ENCODE measurements at regions of chr4 and their contacts with region 1.

Region 1: DNA sequence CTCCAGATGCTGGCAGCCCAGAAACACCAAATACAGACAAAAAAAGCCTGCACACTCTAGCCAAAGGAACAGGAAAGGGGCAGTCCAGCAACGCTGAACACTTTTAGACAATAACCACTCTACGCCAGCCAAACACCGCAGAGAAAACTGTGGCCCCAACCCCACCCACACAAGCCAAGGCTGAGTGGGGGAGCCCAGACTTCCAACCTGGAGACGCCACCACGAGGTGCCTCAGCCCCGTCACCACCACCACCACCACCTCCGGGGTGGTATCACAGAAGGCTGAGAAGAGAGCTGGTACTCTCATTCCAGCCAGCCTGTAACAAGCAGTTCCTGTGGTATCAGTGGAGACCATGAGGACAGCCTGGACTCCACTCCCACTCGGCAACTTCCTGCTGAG is 22.8 kb downstream of the MEPE start:
- DNase-seq: no peak
- H3K4me3 ChIP-seq: no peak overlapping the region
- H3K27ac ChIP-seq: no peak overlapping the region
- H3K4me1 ChIP-seq: no peaks in the 10 kb centered on the region
- H3K27me3 ChIP-seq: no peaks in the 10 kb centered on the region
- CTCF ChIP-seq: no peak

Region 2: GRCh38 chr4:87971866-87972265 is 116.3 kb after region 1 on chr4:
- intact Hi-C with region 1: loop called (anchors 2 kb)
- DNase-seq: no peak
- H3K4me3 ChIP-seq: no peak overlapping the region
- H3K27ac ChIP-seq: no peak overlapping the region
- H3K4me1 ChIP-seq: no peaks in the 10 kb centered on the region
- H3K27me3 ChIP-seq: no peaks in the 10 kb centered on the region
- CTCF ChIP-seq: no peak

Region 3: GRCh38 chr4:88419874-88420273 is 564.3 kb after region 1 on chr4:
- intact Hi-C with region 1: no loop called
- DNase-seq: no peak
- H3K4me3 ChIP-seq: no peak overlapping the region
- H3K27ac ChIP-seq: no peak overlapping the region
- H3K4me1 ChIP-seq: no peaks in the 10 kb centered on the region
- H3K27me3 ChIP-seq: no peaks in the 10 kb centered on the region
- CTCF ChIP-seq: no peak